Activated naive CD4-positive, alpha-beta T cell treated with anti-CD3 and anti-CD28 coated beads for 36 hours (primary cell): ENCODE measurements at regions of chr2 and their contacts with region 1.

Region 1: DNA sequence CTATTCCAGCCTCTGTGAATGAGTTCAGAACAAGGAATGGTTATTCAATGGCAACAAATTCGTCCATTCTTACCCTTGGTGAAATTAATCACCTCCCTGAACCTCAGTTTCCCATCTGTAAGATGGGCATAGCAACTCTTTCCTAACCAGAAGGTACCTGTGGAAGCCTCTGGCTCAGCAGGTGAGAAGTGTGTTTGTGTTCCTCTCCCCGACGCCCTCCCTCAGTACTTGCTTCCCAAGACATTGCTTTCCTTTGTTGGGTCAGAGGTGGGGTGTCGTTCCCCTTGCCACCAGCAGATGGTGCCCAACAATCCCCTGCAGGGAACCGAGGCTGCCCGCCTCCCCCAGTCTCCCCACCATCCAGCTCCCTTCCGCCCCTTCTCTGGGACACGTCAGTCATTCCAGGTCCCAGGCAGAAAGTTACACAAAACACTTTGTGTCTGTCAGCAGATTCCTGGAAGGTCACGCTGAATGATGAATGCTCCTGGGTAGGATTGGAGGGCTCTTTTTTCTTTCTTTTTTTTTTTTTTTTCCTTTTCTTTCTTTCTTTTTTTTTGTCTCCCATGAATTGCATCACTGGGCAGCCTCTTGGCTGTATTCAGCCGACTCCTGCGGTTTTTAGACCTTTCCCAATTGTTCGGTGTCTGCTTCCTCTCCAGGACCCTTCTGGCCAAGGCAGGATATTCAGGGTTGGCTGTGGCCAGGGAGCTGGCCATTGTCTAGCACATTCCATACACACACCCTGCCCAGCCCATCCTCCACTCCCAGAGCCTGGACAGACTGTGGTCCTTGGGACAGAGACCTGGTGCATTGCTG is 117.3 kb downstream of the LPIN1 start:
- DNase-seq: peak; percentile 74
- H3K4me3 Mint-ChIP-seq: no peak overlapping the region
- H3K27ac Mint-ChIP-seq: no peak overlapping the region
- H3K4me1 Mint-ChIP-seq: peaks cover 22% of the 10 kb centered on the region
- H3K27me3 Mint-ChIP-seq: peaks cover 2% of the 10 kb centered on the region

Region 2: DNA sequence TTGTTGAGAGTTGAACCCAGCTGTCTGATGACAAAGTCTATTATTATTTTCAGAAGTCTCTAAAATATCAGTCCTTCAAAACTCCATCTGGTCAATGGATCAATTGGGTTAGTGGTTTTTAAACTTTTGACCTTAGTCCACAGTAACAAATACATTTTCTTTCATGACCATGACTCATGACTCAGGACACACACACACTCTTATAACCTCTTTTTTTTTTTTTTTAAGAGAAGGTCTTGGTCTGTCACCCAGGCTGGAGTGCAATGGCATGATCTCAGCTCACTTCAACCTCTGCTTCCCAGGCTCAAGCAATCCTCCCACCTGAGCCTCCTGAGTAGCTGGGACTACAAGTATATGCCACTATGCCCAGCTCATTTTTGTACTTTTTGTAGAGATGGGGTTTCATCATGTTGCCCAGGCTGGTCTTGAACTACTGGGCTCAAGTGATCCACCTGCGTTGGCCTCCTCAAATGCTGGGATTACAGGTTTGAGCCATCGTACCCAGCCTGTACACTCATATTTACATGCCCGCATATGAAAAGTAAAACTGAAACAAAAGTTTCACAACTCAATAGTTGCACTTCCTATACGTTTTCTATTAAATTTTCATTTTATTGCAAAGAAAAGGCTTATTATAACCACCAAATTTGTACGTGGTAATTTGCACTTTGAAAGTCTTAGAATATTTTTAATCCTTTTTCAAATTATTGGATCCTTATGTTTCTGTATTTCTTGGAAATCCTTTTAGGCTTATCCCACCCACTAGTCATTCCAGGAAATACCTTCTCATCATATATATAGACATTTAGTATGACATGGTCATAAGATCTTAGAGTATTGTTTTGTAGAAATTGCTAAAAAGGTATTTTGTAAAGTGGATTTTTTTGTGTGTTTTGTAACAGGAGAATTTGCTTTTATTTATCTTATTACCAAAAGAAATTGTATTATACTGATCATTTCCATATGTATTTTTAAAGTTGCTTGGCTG is 81.7 kb after region 1 on chr2:
- CTCF ChIA-PET with region 1: no interaction called
- intact Hi-C with region 1: loop called (anchors 2 kb)
- DNase-seq: peak; percentile 32
- H3K4me3 Mint-ChIP-seq: peak overlapping the region; percentile 15
- H3K27ac Mint-ChIP-seq: no peak overlapping the region
- H3K4me1 Mint-ChIP-seq: peaks cover 13% of the 10 kb centered on the region
- H3K27me3 Mint-ChIP-seq: no peaks in the 10 kb centered on the region

Region 3: GRCh38 chr2:12044857-12045256 is 181.1 kb after region 1 on chr2:
- CTCF ChIA-PET with region 1: interaction called, 3 read pairs
- intact Hi-C with region 1: loop called (anchors 2 kb)
- DNase-seq: peak; percentile 17
- H3K4me3 Mint-ChIP-seq: no peak overlapping the region
- H3K27ac Mint-ChIP-seq: no peak overlapping the region
- H3K4me1 Mint-ChIP-seq: peaks cover 53% of the 10 kb centered on the region
- H3K27me3 Mint-ChIP-seq: no peaks in the 10 kb centered on the region

Region 4: DNA sequence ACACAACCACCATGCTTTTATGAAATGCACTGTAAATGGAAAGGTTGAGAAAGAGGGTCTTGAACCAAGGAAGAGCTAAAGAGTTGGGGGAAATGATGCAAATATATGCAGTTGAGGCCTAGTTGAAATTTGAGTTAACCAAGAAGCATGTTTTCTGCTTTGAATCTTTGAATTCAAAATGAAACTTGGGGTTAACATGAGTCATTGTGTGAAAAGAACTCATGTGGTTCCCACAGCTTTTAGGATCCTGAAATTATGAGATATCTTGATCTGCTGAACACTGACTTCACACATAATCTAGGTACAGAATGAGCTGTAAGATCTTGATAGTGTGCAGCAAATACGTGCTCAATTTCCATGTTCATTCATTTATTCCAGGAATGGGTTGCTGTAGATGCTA is 430.2 kb after region 1 on chr2:
- CTCF ChIA-PET with region 1: no interaction called
- intact Hi-C with region 1: loop called (anchors 5 kb)
- DNase-seq: peak; percentile 18
- H3K4me3 Mint-ChIP-seq: no peak overlapping the region
- H3K27ac Mint-ChIP-seq: peak overlapping the region; percentile 75
- H3K4me1 Mint-ChIP-seq: peaks cover 55% of the 10 kb centered on the region
- H3K27me3 Mint-ChIP-seq: peaks cover 6% of the 10 kb centered on the region

Region 5: GRCh38 chr2:12501469-12502158 is 637.9 kb after region 1 on chr2:
- CTCF ChIA-PET with region 1: no interaction called
- intact Hi-C with region 1: loop called (anchors 5 kb)
- DNase-seq: peak; percentile 88
- H3K4me3 Mint-ChIP-seq: no peak overlapping the region
- H3K27ac Mint-ChIP-seq: peak overlapping the region; percentile 47
- H3K4me1 Mint-ChIP-seq: peaks cover 91% of the 10 kb centered on the region
- H3K27me3 Mint-ChIP-seq: no peaks in the 10 kb centered on the region